Right ventricle myocardium inferior (tissue), 1 donor: ENCODE measurements at regions of chr17 and their contacts with region 1.

Region 1: GRCh38 chr17:42980398-42981397 is at the start of gene RUNDC1:
- DNase-seq: peak; percentile 97
- ATAC-seq: peak; percentile 93
- total RNA-seq, gene RUNDC1: 10.4 TPM

Region 2: DNA sequence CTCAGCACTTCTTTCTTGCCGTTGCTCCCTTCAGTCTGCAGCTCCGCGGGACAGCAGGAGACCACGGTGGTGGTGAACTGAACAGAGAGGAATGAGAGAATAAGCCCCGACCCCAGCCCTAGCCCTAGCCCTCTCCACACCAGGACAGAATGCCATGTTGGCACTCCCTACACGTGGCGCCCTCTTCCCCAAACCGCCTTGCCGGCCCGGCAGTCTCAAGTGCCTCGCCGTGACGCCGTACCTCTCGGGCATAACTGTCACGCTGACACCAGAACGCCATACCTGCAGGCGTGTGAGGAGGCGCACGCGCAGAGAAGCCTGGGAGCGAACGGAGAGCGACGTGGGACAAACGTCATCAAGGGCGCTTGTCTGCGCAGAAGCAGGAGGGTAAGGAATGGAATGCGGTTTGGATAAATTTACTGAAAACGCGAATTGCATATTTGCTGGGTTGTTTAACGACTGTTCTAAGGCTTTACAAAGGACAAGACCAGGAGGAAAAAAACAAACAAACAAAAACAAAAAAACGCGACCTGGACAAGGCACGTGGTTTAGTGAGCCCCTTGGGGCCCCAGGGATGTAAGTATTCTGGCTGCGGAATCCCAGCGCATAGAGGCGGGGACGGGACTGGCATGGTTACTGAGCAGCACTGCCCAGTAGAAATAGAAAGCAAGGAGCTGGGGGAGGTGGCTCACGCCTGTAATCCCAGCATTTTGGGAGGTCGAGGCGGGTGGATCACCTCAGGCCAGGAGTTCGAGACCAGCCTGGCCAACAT is 16.4 kb before region 1 on chr17 and contains the start of gene AARSD1:
- intact Hi-C with region 1: no loop called
- DNase-seq: peak; percentile 95
- ATAC-seq: peak; percentile 94
- total RNA-seq, gene AARSD1: 32.1 TPM

Region 3: GRCh38 chr17:42997984-42998938 is 17.6 kb after region 1 on chr17 and contains the start of gene RPL27:
- intact Hi-C with region 1: loop called (anchors 1 kb)
- DNase-seq: peak; percentile 99
- ATAC-seq: peak; percentile 98
- total RNA-seq, gene RPL27: 791 TPM